ENCODE measurements at regions of chr12 and their contacts with region 1.

Region 1: DNA sequence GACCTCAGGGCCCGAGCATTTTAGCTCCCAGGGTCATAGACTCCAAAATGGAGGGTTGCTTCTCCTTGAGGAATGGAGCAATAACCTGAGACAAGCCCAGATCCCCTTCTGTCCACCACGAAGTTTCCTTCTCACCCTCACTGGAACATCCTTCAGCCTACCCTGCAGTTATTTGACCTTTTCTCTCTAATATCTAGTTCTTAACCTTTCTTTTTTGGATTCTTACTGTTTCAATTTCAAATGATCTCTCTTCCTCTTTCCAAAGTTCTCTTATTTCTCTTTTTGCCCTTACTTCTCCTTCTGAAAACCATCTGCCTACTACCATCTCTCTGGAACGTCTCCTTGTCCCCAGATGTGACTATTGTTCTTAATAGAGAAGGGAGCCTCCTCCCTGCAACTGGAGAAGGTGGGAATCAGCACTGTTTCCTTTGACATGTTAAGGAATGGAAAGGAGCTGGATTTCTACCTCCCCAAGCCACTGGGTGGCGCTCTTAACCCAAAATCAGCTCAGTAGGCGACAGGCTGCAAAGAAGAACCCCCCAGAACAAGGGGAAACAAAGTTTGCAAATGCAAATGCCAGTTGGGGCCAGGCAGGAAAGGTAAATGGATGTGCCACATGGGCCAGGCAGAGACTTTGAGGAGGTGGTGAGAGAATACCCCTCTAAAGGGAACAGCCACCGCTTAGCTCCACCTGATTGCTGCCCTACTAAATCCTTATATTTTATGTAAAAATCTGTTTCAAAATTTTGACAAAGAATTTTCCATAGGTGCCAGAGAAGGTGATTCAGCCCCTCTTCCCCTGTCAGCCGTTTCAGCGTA is 22.4 kb upstream of the PDE1B start:
- DNase-seq: no peak

Region 2: GRCh38 chr12:54509617-54510016 is 17.4 kb before region 1 on chr12:
- intact Hi-C with region 1: loop called in 1 of 2 experiments (anchors 1 kb)
- DNase-seq: no peak

Region 3: GRCh38 chr12:54795644-54796043 is 268.6 kb after region 1 on chr12:
- intact Hi-C with region 1: no loop called
- DNase-seq: no peak

Measured in posterior vena cava (tissue), 2 donors.